PC-3 (cell line): ENCODE measurements at regions of chr5 and their contacts with region 1.

Region 1: GRCh38 chr5:42360056-42360455 is 63.2 kb upstream of the GHR start:
- DNase-seq: peak; percentile 95
- ATAC-seq: peak; percentile 93
- H3K4me3 ChIP-seq: peak overlapping the region; percentile 4; the same call in 1 of the 2 replicates
- H3K27ac ChIP-seq: peak overlapping the region; percentile 86
- H3K4me1 ChIP-seq: peaks cover 26% of the 10 kb centered on the region
- H3K27me3 ChIP-seq: no peaks in the 10 kb centered on the region
- CTCF ChIP-seq: no peak

Region 2: DNA sequence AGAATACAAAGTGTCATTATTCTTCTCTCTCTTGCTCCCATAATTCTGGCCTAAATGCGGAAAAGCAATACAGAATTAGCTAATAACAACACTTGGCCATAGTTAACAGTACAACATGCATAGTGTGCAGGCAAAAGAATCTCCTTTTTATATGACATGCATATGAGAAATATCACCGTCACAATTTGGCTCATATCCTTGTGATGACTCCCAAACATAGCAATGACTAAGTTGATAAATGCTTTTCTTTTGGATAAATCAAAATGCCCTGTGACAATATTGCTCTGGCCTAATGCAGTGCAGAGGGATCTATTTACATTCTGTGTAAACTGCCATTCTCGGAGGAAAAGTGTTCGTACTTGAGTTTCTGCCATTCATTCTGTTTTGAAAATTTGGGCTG is 58.7 kb before region 1 on chr5:
- CTCF ChIA-PET with region 1: no interaction called
- POLR2A ChIA-PET with region 1: no interaction called
- intact Hi-C with region 1: loop called (anchors 1 kb)
- DNase-seq: peak; percentile 98
- ATAC-seq: peak; percentile 90
- H3K4me3 ChIP-seq: peak overlapping the region; percentile 26
- H3K27ac ChIP-seq: peak overlapping the region; percentile 79
- H3K4me1 ChIP-seq: peaks cover 28% of the 10 kb centered on the region
- H3K27me3 ChIP-seq: no peaks in the 10 kb centered on the region
- CTCF ChIP-seq: no peak